GM18951 (cell line): ENCODE measurements at regions of chr3 and their contacts with region 1.

Region 1: DNA sequence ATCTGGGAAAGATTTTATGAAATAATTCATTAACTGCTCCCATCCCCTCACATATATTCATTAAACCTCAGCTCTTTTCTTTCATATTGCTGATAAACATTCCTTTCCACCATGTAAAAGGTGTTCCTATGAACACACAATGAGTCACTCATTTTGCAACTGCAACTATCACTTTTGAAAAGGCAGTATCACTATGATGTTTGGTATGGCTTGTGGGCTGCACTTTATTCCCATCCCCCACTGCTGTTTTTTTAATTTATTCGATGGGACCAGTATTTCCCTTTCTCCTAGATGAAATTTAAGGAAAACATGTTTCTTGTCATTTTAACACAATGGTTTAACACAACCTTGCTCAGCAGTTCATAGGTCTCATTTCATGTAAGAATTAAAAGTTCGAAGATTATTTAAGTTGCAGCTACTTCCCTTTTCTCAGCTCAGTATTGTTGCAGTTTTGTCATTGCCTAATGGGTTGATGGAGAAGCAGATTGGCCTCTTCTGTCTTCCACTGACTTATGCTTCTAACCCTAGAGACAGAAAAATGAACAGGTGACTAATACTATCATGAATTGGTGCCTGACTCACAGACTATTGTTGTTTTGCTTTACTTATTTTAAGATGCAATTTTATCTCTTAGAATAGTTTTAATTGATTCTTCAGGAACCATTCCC is 280.3 kb downstream of the ZPLD1 start:
- POLR2A ChIP-seq: no peak

Region 2: DNA sequence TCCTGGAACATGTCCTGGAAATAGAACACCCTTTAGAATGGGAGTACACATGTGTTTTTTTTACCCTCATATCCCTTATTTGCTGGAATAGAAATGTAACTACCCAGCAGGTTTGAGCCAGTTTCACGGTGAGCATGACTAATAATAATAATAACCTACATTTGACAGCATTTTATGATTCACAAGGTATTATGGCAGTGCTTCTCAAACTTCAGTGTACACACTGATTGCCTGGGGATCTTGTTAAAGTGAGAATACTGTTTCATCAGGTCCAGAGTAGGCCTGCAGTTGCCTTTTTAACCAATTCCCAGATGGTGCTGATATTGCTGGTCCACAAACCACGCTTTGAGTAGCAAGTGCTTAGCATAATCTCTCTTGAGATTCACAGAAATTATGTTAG is 802.0 kb before region 1 on chr3:
- in situ Hi-C with region 1: no loop called
- POLR2A ChIP-seq: no peak

Region 3: GRCh38 chr3:103644450-103644849 is 929.3 kb after region 1 on chr3:
- in situ Hi-C with region 1: loop called (anchors 25 kb)
- POLR2A ChIP-seq: no peak